Activated CD4-positive, alpha-beta T cell treated with anti-CD3 and anti-CD28 coated beads, Interleukin-2, amount 10 ng/mL, durations not matched to agents 24 days and 14 days (primary cell): ENCODE measurements at regions of chr11 and their contacts with region 1.

Region 1: GRCh38 chr11:13868710-13869397 is 93.7 kb upstream of the SPON1 start:
- DNase-seq: peak; percentile 81
- H3K4me3 Mint-ChIP-seq: peak overlapping the region; percentile 47
- H3K27ac Mint-ChIP-seq: peak overlapping the region; percentile 86
- H3K4me1 Mint-ChIP-seq: peaks cover 40% of the 10 kb centered on the region
- H3K27me3 Mint-ChIP-seq: no peaks in the 10 kb centered on the region

Region 2: GRCh38 chr11:13942983-13943382 is 74.1 kb after region 1 on chr11:
- intact Hi-C with region 1: loop called (anchors 10 kb)
- DNase-seq: no peak
- H3K4me3 Mint-ChIP-seq: no peak overlapping the region
- H3K27ac Mint-ChIP-seq: no peak overlapping the region
- H3K4me1 Mint-ChIP-seq: peaks cover 48% of the 10 kb centered on the region
- H3K27me3 Mint-ChIP-seq: peaks cover 6% of the 10 kb centered on the region

Region 3: GRCh38 chr11:14012846-14013245 is 144.0 kb after region 1 on chr11:
- intact Hi-C with region 1: no loop called
- DNase-seq: no peak
- H3K4me3 Mint-ChIP-seq: no peak overlapping the region
- H3K27ac Mint-ChIP-seq: no peak overlapping the region
- H3K4me1 Mint-ChIP-seq: no peaks in the 10 kb centered on the region
- H3K27me3 Mint-ChIP-seq: peaks cover 2% of the 10 kb centered on the region

Region 4: GRCh38 chr11:14386895-14387480 is 518.1 kb after region 1 on chr11:
- intact Hi-C with region 1: no loop called
- DNase-seq: no peak
- H3K4me3 Mint-ChIP-seq: no peak overlapping the region
- H3K27ac Mint-ChIP-seq: no peak overlapping the region
- H3K4me1 Mint-ChIP-seq: peaks cover 2% of the 10 kb centered on the region
- H3K27me3 Mint-ChIP-seq: peaks cover 30% of the 10 kb centered on the region